ENCODE measurements at regions of chr5 and their contacts with region 1.

Region 1: DNA sequence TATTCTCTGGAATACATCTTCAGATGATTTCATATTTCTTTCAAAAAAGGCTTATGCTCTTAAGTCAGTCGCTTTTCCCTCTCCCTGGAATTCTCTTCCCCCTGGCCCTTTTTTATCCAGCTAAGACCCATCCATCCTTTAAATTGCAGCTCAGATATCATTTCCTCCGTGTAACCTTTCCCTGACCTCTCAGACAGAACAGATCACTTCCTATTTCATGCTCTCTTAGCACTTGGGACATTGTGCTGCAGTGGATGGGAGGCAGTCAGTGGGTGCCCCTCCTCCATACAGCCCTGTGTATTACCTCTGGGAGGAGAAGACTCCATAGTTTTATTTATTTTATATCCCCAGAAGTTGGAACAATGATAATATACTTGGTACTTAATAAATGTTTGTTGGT is 423.4 kb downstream of the ISL1 start:
- DNase-seq: no peak
- H3K4me3 ChIP-seq: no peak overlapping the region
- H3K27ac ChIP-seq: no peak overlapping the region
- H3K4me1 ChIP-seq: peaks cover 13% of the 10 kb centered on the region
- H3K27me3 ChIP-seq: no peaks in the 10 kb centered on the region
- CTCF ChIP-seq: no peak

Region 2: DNA sequence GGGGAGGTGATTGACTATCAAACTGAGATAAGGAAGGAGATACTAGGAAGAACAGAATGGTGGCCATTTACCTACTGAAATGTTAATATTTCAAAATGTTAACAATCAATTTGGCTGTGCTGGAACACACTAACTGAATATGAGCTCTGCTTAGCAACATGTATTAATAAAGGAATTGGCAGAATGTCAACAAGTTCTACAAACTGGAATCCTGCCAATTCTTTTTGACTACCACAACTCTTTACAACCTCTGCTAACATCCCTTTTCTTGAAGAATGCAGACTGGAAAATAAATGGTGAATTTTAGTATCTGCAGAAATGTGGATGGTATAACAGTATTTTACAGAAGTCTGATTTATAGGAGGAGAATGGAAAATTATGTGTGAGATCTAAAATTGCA is 23.0 kb after region 1 on chr5:
- CTCF ChIA-PET with region 1: no interaction called
- POLR2A ChIA-PET with region 1: no interaction called
- intact Hi-C with region 1: no loop called
- DNase-seq: no peak
- H3K4me3 ChIP-seq: no peak overlapping the region
- H3K27ac ChIP-seq: peak overlapping the region; percentile 74
- H3K4me1 ChIP-seq: peaks cover 24% of the 10 kb centered on the region
- H3K27me3 ChIP-seq: no peaks in the 10 kb centered on the region
- CTCF ChIP-seq: no peak

Region 3: GRCh38 chr5:51902486-51902885 is 95.8 kb after region 1 on chr5:
- CTCF ChIA-PET with region 1: no interaction called
- POLR2A ChIA-PET with region 1: no interaction called
- intact Hi-C with region 1: no loop called
- DNase-seq: no peak
- H3K4me3 ChIP-seq: no peak overlapping the region
- H3K27ac ChIP-seq: no peak overlapping the region
- H3K4me1 ChIP-seq: no peaks in the 10 kb centered on the region
- H3K27me3 ChIP-seq: no peaks in the 10 kb centered on the region
- CTCF ChIP-seq: no peak

Region 4: DNA sequence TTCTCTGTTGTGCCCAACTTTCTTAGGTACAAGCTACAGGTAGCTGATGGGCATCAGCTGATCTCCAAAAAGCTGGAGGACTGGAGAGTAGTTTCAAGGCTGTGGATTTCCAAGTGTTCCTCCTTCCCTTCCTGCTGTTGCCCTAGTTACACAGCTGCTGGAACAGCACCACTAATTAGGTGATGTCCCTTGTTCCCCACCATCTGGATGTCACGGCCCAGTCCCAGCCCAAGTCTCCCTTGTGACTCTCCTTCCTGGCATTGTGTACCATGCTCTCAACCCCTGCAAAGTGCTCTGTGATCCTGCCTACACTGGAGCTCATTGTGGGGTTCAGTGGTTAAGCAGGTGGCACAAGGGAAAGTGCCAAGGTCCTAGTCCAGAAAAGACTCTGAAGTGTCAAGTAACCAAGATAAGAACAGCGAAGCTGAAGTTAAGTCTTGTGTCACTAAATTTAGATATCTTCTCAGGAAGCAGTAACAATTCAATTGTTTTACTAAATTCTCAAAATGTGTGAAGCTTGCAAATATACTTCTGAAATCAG is 181.1 kb after region 1 on chr5:
- CTCF ChIA-PET with region 1: no interaction called
- POLR2A ChIA-PET with region 1: interaction called, 11 read pairs
- intact Hi-C with region 1: no loop called
- DNase-seq: no peak
- H3K4me3 ChIP-seq: no peak overlapping the region
- H3K27ac ChIP-seq: no peak overlapping the region
- H3K4me1 ChIP-seq: no peaks in the 10 kb centered on the region
- H3K27me3 ChIP-seq: no peaks in the 10 kb centered on the region
- CTCF ChIP-seq: no peak

Region 5: DNA sequence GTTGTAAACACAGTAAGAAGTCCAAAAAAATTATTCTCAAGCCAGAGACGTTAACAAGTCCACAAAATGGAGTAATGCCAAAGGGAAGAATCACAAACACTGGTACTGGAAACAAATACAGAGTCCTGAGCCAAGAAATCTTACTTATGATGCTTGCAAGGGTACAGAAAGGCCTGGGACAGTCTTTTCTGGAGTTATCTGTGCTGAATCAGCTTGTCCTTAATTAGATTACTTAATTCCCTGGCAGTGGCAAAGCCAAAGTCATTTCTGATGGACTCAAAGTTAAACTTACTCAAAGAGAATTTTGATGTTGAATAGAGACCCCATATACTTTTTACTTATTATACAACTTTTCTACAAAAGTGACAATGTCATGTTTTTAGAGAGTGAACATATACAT is 370.5 kb after region 1 on chr5:
- CTCF ChIA-PET with region 1: no interaction called
- POLR2A ChIA-PET with region 1: no interaction called
- intact Hi-C with region 1: no loop called
- DNase-seq: no peak
- H3K4me3 ChIP-seq: no peak overlapping the region
- H3K27ac ChIP-seq: no peak overlapping the region
- H3K4me1 ChIP-seq: no peaks in the 10 kb centered on the region
- H3K27me3 ChIP-seq: no peaks in the 10 kb centered on the region
- CTCF ChIP-seq: no peak